ENCODE measurements at regions of chr5 and their contacts with region 1.

Region 1: GRCh38 chr5:56190497-56190896 is 42.6 kb downstream of the ANKRD55 start:
- DNase-seq: no peak
- H3K4me3 Mint-ChIP-seq: no peak overlapping the region
- H3K27ac Mint-ChIP-seq: no peak overlapping the region
- H3K4me1 Mint-ChIP-seq: peaks cover 5% of the 10 kb centered on the region
- H3K27me3 Mint-ChIP-seq: no peaks in the 10 kb centered on the region

Region 2: DNA sequence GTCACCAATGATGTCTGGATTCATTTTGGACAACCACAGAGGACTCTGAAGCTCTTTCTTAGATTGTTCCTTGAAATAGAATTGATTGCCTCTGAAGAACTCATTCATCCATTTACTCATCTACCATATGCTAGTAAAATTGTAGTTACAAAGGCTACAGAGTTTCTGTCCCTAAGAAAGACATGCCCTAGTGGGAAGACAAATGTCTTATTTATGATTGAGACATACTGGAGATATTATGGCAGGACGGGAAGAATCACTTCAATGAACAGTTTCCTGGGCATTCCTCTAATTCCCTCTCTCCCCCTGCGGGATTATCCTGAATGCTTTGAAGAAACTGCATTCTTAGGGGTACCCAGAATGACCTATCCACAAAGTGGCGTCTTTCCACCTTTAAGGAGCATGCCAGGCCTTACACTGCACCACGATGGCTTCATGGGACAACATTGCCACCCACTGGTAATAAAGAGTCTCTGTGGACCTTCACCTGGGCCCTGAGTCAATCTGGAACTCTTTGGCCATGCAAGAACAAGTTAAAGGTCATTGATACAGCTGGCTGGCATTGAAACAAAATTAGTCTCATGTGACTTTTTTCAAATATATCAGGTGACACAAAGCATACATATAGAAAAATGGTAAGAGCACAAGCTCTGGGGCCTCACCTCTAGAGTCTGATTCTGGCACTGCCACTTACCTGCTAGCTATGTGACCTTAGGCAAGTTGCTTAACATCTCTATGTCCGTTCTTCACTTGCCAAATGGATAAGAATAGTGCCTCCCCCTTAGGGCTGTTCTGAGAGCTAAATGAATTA is 10.6 kb after region 1 on chr5:
- CTCF ChIA-PET with region 1: interaction called, 10 read pairs
- POLR2A ChIA-PET with region 1: no interaction called
- DNase-seq: peak; percentile 75
- H3K4me3 Mint-ChIP-seq: no peak overlapping the region
- H3K27ac Mint-ChIP-seq: no peak overlapping the region
- H3K4me1 Mint-ChIP-seq: peaks cover 22% of the 10 kb centered on the region
- H3K27me3 Mint-ChIP-seq: no peaks in the 10 kb centered on the region

Measured in activated CD4-positive, alpha-beta T cell treated with anti-CD3 and anti-CD28 coated beads, Interleukin-2, amount 10 ng/mL, durations not matched to agents 7 days and 5 days (primary cell).